HAP-1 (cell line): ENCODE measurements at regions of chr13 and their contacts with region 1.

Region 1: GRCh38 chr13:26985285-26985878 is 186.2 kb downstream of the USP12 start:
- DNase-seq: peak; percentile 82 to 83
- H3K4me3 ChIP-seq: no peak overlapping the region
- H3K4me1 ChIP-seq: no peaks in the 10 kb centered on the region
- H3K27me3 ChIP-seq: no peaks in the 10 kb centered on the region

Region 2: GRCh38 chr13:27251166-27252091 is 266.0 kb after region 1 on chr13 and contains the start of gene RPL21:
- in situ Hi-C with region 1: loop called (anchors 10 kb)
- DNase-seq: peak; percentile 84 to 92
- H3K4me3 ChIP-seq: peak within 1 kb of the TSS; percentile 97
- H3K4me1 ChIP-seq: peaks cover 5% of the 10 kb centered on the region
- H3K27me3 ChIP-seq: no peaks in the 10 kb centered on the region

Region 3: DNA sequence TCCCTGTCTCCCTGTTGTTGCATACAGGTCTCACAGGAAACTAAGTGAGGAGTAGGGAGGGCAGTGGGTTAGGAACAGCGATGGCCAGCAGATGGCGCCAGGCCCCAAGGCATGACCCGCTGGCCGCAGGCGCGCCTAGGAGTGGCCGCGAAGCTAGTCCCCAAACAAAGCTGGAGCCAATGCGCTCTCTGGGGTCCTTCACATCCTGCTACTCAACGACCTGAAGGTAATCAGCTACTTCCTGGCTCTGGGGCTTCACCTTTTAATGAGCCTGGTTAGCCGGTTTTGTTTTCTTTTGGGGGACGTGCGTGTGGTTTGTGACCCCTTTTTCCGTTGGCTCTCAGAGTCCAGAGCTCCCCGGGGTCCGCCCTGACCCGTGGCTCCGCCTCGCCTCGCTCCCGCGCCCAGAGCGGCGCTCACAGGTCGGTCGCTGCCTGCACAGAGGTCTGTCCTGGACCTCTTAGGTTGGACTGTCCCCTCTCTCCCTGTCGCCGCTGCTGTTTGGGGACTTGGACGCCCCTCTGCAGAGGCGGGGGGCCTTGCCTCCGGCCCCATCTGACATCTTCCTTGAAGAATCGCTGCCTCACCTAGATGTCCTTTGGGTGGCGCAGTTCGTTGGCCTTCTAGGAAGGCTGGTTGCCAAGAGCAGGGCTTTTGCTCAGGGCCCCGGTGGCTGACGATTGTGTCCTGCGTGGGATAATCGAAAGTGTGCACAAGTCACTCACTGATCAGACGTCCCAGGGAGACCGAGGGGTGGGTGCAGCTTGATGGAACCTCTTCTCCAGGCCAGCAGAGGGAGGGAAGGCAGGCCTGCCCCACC is 376.9 kb after region 1 on chr13:
- in situ Hi-C with region 1: loop called (anchors 5 kb)
- DNase-seq: peak; percentile 77 to 92
- H3K4me3 ChIP-seq: peak overlapping the region; percentile 24
- H3K4me1 ChIP-seq: peaks cover 4% of the 10 kb centered on the region
- H3K27me3 ChIP-seq: no peaks in the 10 kb centered on the region